GM12878 (cell line): ENCODE measurements at regions of chr22 and their contacts with region 1.

Region 1: GRCh38 chr22:49767355-49768062 is 60.2 kb downstream of the BRD1 start:
- DNase-seq: peak; percentile 50
- ATAC-seq: peak; percentile 77
- H3K4me3 ChIP-seq: no peak overlapping the region
- H3K27ac ChIP-seq: no peak overlapping the region
- H3K4me1 ChIP-seq: no peaks in the 10 kb centered on the region
- H3K27me3 ChIP-seq: no peaks in the 10 kb centered on the region
- CTCF ChIP-seq: peak; percentile 71 to 85 (median 84)
- EP300 ChIP-seq: no peak
- POLR2A ChIP-seq: no peak
- RAD21 ChIP-seq: peak; percentile 86

Region 2: DNA sequence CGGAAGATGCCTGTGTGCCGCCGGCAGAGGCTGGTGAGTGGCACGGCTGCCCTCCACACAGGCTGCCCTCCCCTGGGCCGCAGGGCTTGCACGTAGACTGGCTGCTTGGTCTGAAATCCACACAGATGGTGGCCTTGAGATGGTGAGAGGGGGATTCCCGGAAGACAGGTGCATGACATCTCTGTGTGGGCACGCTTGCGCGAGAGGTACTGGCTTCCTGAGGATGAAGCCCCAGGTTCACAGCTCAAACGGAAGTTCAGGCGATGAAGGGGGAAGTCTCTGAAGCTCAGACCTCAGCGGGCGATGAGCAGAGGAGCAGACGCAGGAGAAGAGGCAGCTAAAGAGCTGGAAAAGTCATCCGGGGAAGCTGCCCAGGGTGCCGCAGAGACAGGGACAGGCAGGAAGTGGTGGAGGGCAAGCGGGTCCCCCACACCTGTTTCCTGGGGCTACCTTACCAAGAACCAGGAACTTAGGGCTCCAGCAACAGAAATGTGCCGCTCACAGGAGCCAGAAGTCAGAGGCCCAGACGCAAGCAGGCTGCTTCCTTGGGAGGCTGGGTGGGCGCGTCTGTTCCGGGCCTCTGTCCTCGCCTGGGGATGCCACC is 158.1 kb after region 1 on chr22:
- CTCF ChIA-PET with region 1: interaction called, 13 read pairs
- POLR2A ChIA-PET with region 1: no interaction called
- RAD21 ChIA-PET with region 1: interaction called, 4 read pairs
- SMC1A ChIA-PET with region 1: interaction called, 9 read pairs
- in situ Hi-C with region 1: loop called (anchors 5 kb)
- intact Hi-C with region 1: loop called (anchors 1 kb)
- DNase-seq: peak; percentile 71
- ATAC-seq: peak; percentile 72
- H3K4me3 ChIP-seq: peak overlapping the region; percentile 38; the same call in 1 of the 2 replicates
- H3K27ac ChIP-seq: peak overlapping the region; percentile 91
- H3K4me1 ChIP-seq: peaks cover 39% of the 10 kb centered on the region
- H3K27me3 ChIP-seq: no peaks in the 10 kb centered on the region
- CTCF ChIP-seq: no peak
- EP300 ChIP-seq: no peak
- POLR2A ChIP-seq: peak; percentile 85
- RAD21 ChIP-seq: no peak